ENCODE measurements at regions of chr5 and their contacts with region 1.

Region 1: GRCh38 chr5:152379331-152379730 is 25.7 kb downstream of the NMUR2 start:
- DNase-seq: peak; percentile 27
- ATAC-seq: peak; percentile 62
- H3K4me3 ChIP-seq: no peak overlapping the region
- H3K27ac ChIP-seq: no peak overlapping the region
- H3K4me1 ChIP-seq: peaks cover 15% of the 10 kb centered on the region
- H3K27me3 ChIP-seq: no peaks in the 10 kb centered on the region
- CTCF ChIP-seq: peak; percentile 49

Region 2: DNA sequence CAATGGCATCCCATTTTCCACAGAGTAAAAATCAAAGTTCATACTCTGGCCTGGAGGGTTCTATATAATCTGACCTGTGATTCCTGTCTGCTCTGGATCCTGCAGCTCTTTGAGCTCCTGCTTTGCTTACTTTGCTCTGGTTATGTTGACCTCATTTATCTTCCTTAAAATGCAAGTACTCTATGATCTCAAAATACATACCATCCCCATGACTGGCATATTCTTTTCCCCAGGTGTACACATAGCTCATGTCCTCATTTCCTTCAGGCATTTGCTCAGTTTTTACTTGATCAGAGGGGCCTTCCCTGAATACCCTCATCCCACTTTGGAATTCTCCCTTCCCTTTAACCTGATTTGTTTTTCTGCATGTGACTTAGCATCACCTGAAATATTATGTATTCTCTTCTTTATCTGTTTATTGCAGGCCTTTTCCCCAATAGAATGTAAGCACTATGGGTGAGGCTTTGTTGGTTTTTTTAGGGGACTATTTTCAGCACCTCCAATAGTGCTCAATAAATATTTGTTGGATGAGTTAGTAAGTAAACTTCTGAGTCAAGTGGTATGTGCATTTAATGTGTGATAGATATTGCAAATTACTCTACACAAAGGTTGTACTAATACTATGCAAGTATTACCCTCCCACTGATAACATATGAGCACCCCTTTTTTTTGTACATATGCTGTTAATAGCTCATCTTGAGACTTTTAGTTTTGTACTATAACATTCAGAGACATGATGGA is 185.8 kb before region 1 on chr5:
- CTCF ChIA-PET with region 1: no interaction called
- POLR2A ChIA-PET with region 1: interaction called, 3 read pairs
- intact Hi-C with region 1: loop called (anchors 2 kb)
- DNase-seq: peak; percentile 90
- ATAC-seq: peak; percentile 76
- H3K4me3 ChIP-seq: peak overlapping the region; percentile 38
- H3K27ac ChIP-seq: peak overlapping the region; percentile 86
- H3K4me1 ChIP-seq: peaks cover 52% of the 10 kb centered on the region
- H3K27me3 ChIP-seq: no peaks in the 10 kb centered on the region
- CTCF ChIP-seq: no peak

Region 3: GRCh38 chr5:152329207-152329606 is 50.1 kb before region 1 on chr5:
- CTCF ChIA-PET with region 1: no interaction called
- POLR2A ChIA-PET with region 1: no interaction called
- intact Hi-C with region 1: no loop called
- DNase-seq: no peak
- ATAC-seq: no peak; the same call in 1 of the 2 replicates
- H3K4me3 ChIP-seq: no peak overlapping the region
- H3K27ac ChIP-seq: no peak overlapping the region
- H3K4me1 ChIP-seq: no peaks in the 10 kb centered on the region
- H3K27me3 ChIP-seq: no peaks in the 10 kb centered on the region
- CTCF ChIP-seq: no peak

Region 4: DNA sequence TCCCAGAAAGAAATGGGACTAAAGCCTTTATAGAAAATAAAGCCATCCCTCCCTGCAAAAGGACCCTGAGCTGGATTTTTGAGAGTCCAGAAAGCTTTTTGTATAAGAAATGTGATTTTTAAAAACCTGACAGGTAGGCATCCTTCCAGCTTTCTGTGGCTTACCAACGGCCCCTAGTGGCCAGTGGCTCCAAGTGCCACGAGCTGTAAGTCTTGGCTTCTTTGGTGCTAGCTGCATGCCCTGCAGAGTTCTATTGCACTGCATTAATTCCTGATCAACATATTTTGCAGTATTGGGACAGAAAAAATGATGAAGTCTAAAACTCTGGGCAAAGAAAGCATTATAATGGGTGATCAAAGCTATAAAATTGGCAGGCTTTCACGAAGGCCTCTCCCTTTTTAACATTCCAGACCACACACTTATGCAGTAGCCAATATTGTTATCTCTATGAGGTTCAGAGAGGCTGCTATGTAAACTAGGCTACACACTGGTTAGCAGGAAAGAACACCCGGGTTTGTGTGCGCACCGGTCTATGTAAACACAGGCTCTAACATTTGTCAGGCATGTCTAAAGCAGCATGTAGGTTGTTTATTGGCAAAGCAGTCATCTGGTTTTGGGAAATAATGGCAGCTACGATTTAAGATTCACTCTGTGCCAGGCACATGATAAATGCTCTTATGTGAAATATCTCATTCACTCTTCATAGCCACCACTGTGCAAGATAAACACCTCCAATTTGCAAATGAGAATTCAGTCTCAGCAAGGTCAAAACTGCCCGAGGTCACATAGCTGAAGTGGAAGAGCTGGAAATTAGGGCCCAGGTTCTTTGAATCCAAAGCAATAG is 29.4 kb before region 1 on chr5:
- CTCF ChIA-PET with region 1: no interaction called
- POLR2A ChIA-PET with region 1: no interaction called
- intact Hi-C with region 1: loop called (anchors 2 kb)
- DNase-seq: peak; percentile 79
- ATAC-seq: peak; percentile 83
- H3K4me3 ChIP-seq: no peak overlapping the region
- H3K27ac ChIP-seq: no peak overlapping the region
- H3K4me1 ChIP-seq: no peaks in the 10 kb centered on the region
- H3K27me3 ChIP-seq: no peaks in the 10 kb centered on the region
- CTCF ChIP-seq: peak; percentile 98

Region 5: GRCh38 chr5:152505442-152506042 is 126.2 kb after region 1 on chr5:
- CTCF ChIA-PET with region 1: no interaction called
- POLR2A ChIA-PET with region 1: no interaction called
- intact Hi-C with region 1: loop called (anchors 5 kb)
- DNase-seq: peak; percentile 65
- ATAC-seq: peak; percentile 74
- H3K4me3 ChIP-seq: no peak overlapping the region
- H3K27ac ChIP-seq: no peak overlapping the region
- H3K4me1 ChIP-seq: no peaks in the 10 kb centered on the region
- H3K27me3 ChIP-seq: 0 out of 2 replicates have a peak, but pooled peaks cover 5% of the 10 kb centered on the region
- CTCF ChIP-seq: peak; percentile 77